Activated CD4-positive, alpha-beta T cell treated with anti-CD3 and anti-CD28 coated beads, Interleukin-2, amount 10 ng/mL, durations not matched to agents 7 days and 5 days (primary cell): ENCODE measurements at regions of chr11 and their contacts with region 1.

Region 1: DNA sequence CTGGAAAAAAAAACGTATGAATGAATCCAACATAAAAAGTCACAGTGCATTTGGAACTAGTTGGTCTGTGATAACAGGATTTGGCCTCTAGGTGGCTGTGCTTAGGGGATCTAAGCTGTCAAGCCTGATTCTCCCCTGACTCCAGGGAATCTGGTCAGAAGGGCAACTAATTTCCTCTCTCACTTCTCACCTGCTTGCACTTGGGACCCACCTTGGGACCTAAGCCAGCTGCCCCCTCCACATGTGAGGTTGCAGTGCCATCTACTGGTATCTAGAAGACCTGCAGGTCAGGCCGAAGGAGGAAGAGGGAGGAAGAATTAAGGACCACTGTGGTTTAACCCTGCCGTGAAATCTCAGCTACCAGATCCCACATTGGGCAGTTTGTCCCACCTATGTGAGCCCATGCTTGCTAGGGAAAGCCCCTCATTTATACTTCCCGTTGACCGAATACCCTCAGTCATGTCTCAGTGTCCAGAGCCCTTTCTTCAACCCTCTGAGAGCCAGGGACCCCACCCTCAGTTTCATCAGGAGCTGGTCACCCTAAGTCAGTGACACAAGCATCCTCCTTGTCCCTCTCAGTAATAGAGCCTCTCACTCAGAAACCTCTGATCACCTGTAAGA is 33.2 kb upstream of the CAVIN3 start:
- DNase-seq: peak; percentile 68
- H3K4me3 Mint-ChIP-seq: no peak overlapping the region
- H3K27ac Mint-ChIP-seq: peak overlapping the region; percentile 2
- H3K4me1 Mint-ChIP-seq: peaks cover 3% of the 10 kb centered on the region
- H3K27me3 Mint-ChIP-seq: peaks cover 2% of the 10 kb centered on the region

Region 2: GRCh38 chr11:6251120-6251733 is 102.2 kb before region 1 on chr11:
- CTCF ChIA-PET with region 1: interaction called, 24 read pairs
- POLR2A ChIA-PET with region 1: no interaction called
- DNase-seq: peak; percentile 58
- H3K4me3 Mint-ChIP-seq: no peak overlapping the region
- H3K27ac Mint-ChIP-seq: no peak overlapping the region
- H3K4me1 Mint-ChIP-seq: no peaks in the 10 kb centered on the region
- H3K27me3 Mint-ChIP-seq: peaks cover 2% of the 10 kb centered on the region

Region 3: DNA sequence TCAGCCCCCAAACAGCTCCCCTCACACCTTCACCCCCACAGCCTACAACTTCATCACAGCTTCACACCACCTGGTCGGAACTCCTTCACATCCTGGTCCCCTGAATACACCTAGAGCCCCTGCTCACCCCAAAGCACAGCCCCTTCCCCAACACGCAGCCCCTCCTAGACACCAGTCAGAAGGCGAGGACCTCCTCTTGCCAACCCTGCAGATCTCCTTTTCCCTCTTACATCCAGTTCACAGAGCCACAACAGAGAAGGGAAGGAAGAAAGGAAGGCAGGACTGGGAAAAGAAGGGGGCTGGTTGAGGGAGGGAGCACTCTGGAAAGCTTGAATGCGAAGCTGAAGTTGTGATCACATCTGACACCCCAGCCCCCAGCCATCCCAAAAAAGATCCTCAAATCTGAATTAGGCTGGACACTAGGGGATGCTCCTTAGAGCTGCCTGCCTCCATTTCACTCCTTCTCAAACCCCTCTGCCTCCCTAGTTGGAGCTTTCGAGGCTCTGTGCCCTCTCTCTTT is 93.2 kb before region 1 on chr11:
- CTCF ChIA-PET with region 1: interaction called, 13 read pairs
- POLR2A ChIA-PET with region 1: no interaction called
- DNase-seq: no peak
- H3K4me3 Mint-ChIP-seq: no peak overlapping the region
- H3K27ac Mint-ChIP-seq: no peak overlapping the region
- H3K4me1 Mint-ChIP-seq: peaks cover 5% of the 10 kb centered on the region
- H3K27me3 Mint-ChIP-seq: peaks cover 15% of the 10 kb centered on the region

Region 4: GRCh38 chr11:6315811-6316425 is 37.6 kb before region 1 on chr11:
- CTCF ChIA-PET with region 1: interaction called, 12 read pairs
- POLR2A ChIA-PET with region 1: no interaction called
- DNase-seq: peak; percentile 43
- H3K4me3 Mint-ChIP-seq: no peak overlapping the region
- H3K27ac Mint-ChIP-seq: no peak overlapping the region
- H3K4me1 Mint-ChIP-seq: peaks cover 12% of the 10 kb centered on the region
- H3K27me3 Mint-ChIP-seq: peaks cover 62% of the 10 kb centered on the region

Region 5: DNA sequence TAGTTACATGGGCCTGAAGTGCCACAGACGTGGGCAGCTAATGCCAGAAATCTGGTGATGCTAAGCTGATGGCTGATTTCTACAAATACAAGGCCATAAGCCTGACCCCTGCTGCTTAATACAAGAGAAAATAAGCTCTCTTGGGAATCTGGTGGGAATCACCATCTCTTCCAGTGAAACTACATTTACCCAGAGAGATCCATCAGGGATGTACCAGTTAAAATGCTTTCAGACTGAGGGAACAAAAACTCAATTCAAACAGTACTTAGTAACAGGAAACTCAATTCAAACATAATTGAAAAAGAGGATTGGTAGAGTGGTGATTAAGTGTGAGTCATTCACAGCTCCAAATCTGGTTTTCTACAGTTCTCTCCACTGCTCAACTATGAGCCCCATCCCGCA is 31.5 kb before region 1 on chr11:
- CTCF ChIA-PET with region 1: interaction called, 18 read pairs
- POLR2A ChIA-PET with region 1: no interaction called
- DNase-seq: no peak
- H3K4me3 Mint-ChIP-seq: no peak overlapping the region
- H3K27ac Mint-ChIP-seq: peak overlapping the region; percentile 74
- H3K4me1 Mint-ChIP-seq: peaks cover 27% of the 10 kb centered on the region
- H3K27me3 Mint-ChIP-seq: peaks cover 34% of the 10 kb centered on the region

Region 6: DNA sequence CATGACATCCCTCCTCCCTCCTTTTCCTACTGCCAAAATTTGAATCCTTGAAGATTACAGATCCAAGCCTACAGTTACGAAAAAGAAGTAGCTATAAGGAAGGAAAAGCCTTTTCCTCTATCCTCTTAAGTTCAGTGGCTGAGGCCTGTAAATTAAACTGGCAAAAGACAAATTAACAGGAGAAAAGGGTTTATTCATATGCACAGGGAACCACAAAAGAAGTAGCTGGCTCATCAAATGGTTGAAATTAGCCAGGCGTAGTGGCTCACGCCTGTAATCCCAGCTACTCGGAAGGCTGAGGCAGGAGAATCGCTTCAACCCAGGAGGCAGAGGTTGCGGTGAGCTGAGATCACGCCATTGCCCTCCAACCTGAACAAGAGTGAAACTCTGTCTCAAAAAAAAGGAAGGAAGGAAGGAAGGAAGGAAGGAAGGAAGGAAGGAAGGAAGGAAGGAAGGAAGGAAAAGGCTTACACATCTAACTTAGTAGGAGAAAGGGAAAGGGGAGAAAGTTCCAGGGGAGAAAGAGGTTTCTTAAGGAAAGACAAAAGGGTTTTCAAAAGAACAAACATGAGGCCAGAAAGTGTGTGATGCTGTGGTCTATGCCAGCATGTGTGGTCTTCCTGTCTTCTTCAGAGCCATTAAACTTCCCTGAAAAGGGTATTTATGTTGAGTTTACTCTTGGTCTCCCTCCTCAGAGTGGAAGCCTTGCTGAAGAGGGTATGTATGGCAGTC is 31.7 kb after region 1 on chr11:
- CTCF ChIA-PET with region 1: no interaction called
- POLR2A ChIA-PET with region 1: no interaction called
- DNase-seq: no peak
- H3K4me3 Mint-ChIP-seq: no peak overlapping the region
- H3K27ac Mint-ChIP-seq: no peak overlapping the region
- H3K4me1 Mint-ChIP-seq: peaks cover 26% of the 10 kb centered on the region
- H3K27me3 Mint-ChIP-seq: no peaks in the 10 kb centered on the region